Endothelial cell of umbilical vein (primary cell): ENCODE measurements at regions of chr7 and their contacts with region 1.

Region 1: GRCh38 chr7:33722383-33723101 is 182.8 kb upstream of the BMPER start:
- DNase-seq: peak; percentile 59
- H3K4me3 ChIP-seq: no peak overlapping the region
- H3K27ac ChIP-seq: peak overlapping the region; percentile 33
- H3K4me1 ChIP-seq: peaks cover 55% of the 10 kb centered on the region
- H3K27me3 ChIP-seq: no peaks in the 10 kb centered on the region
- CTCF ChIP-seq: no peak
- POLR2A ChIP-seq: no peak

Region 2: GRCh38 chr7:32495298-32496176 is 1227.0 kb before region 1 on chr7 and contains the start of gene AVL9:
- CTCF ChIA-PET with region 1: no interaction called
- POLR2A ChIA-PET with region 1: no interaction called
- dilution Hi-C with region 1: no loop called
- intact Hi-C with region 1: loop called (anchors 10 kb)
- DNase-seq: peak; percentile 96
- H3K4me3 ChIP-seq: peak within 1 kb of the TSS; percentile 89 to 100 (median 100)
- H3K27ac ChIP-seq: peak within 1 kb of the TSS; percentile 82
- H3K4me1 ChIP-seq: peaks cover 13% of the 10 kb centered on the region
- H3K27me3 ChIP-seq: no peaks in the 10 kb centered on the region
- CTCF ChIP-seq: no peak
- POLR2A ChIP-seq: peak; percentile 97
- total RNA-seq, gene AVL9: 42.5 and 44.1 TPM in 2 replicates

Region 3: GRCh38 chr7:32891800-32892520 is 830.6 kb before region 1 on chr7:
- CTCF ChIA-PET with region 1: no interaction called
- POLR2A ChIA-PET with region 1: no interaction called
- dilution Hi-C with region 1: no loop called
- intact Hi-C with region 1: loop called (anchors 5 kb)
- DNase-seq: peak; percentile 96
- H3K4me3 ChIP-seq: peak overlapping the region in 2 of 3 experiments; percentile 68 to 90
- H3K27ac ChIP-seq: peak overlapping the region; percentile 99
- H3K4me1 ChIP-seq: peaks cover 46% of the 10 kb centered on the region
- H3K27me3 ChIP-seq: no peaks in the 10 kb centered on the region
- CTCF ChIP-seq: no peak
- POLR2A ChIP-seq: no peak

Region 4: GRCh38 chr7:33334349-33334748 is 388.2 kb before region 1 on chr7:
- CTCF ChIA-PET with region 1: no interaction called
- POLR2A ChIA-PET with region 1: no interaction called
- dilution Hi-C with region 1: no loop called
- intact Hi-C with region 1: loop called (anchors 10 kb)
- DNase-seq: peak; percentile 41
- H3K4me3 ChIP-seq: no peak overlapping the region
- H3K27ac ChIP-seq: no peak overlapping the region
- H3K4me1 ChIP-seq: no peaks in the 10 kb centered on the region
- H3K27me3 ChIP-seq: no peaks in the 10 kb centered on the region
- CTCF ChIP-seq: peak; percentile 20 to 52
- POLR2A ChIP-seq: no peak

Region 5: GRCh38 chr7:33591490-33592065 is 131.0 kb before region 1 on chr7:
- CTCF ChIA-PET with region 1: no interaction called
- POLR2A ChIA-PET with region 1: no interaction called
- dilution Hi-C with region 1: no loop called
- intact Hi-C with region 1: loop called (anchors 5 kb)
- DNase-seq: peak; percentile 69
- H3K4me3 ChIP-seq: no peak overlapping the region
- H3K27ac ChIP-seq: peak overlapping the region; percentile 27
- H3K4me1 ChIP-seq: peaks cover 17% of the 10 kb centered on the region
- H3K27me3 ChIP-seq: no peaks in the 10 kb centered on the region
- CTCF ChIP-seq: no peak
- POLR2A ChIP-seq: no peak

Region 6: GRCh38 chr7:33744293-33745075 is 21.9 kb after region 1 on chr7:
- CTCF ChIA-PET with region 1: interaction called, 7 read pairs
- POLR2A ChIA-PET with region 1: no interaction called
- dilution Hi-C with region 1: no loop called
- intact Hi-C with region 1: loop called (anchors 1 kb)
- DNase-seq: peak; percentile 34
- H3K4me3 ChIP-seq: no peak overlapping the region
- H3K27ac ChIP-seq: no peak overlapping the region
- H3K4me1 ChIP-seq: peaks cover 11% of the 10 kb centered on the region
- H3K27me3 ChIP-seq: no peaks in the 10 kb centered on the region
- CTCF ChIP-seq: peak; percentile 32 to 40
- POLR2A ChIP-seq: no peak

Region 7: GRCh38 chr7:33789871-33790630 is 67.5 kb after region 1 on chr7:
- CTCF ChIA-PET with region 1: no interaction called
- POLR2A ChIA-PET with region 1: no interaction called
- dilution Hi-C with region 1: no loop called
- intact Hi-C with region 1: no loop called
- DNase-seq: peak; percentile 84
- H3K4me3 ChIP-seq: no peak overlapping the region
- H3K27ac ChIP-seq: peak overlapping the region; percentile 40
- H3K4me1 ChIP-seq: peaks cover 7% of the 10 kb centered on the region
- H3K27me3 ChIP-seq: no peaks in the 10 kb centered on the region
- CTCF ChIP-seq: no peak
- POLR2A ChIP-seq: no peak

Region 8: GRCh38 chr7:34453150-34453549 is 730.6 kb after region 1 on chr7:
- CTCF ChIA-PET with region 1: no interaction called
- POLR2A ChIA-PET with region 1: no interaction called
- dilution Hi-C with region 1: no loop called
- intact Hi-C with region 1: loop called (anchors 5 kb)
- DNase-seq: peak; percentile 71
- H3K4me3 ChIP-seq: peak overlapping the region in 1 of 3 experiments; percentile 27
- H3K27ac ChIP-seq: peak overlapping the region; percentile 63
- H3K4me1 ChIP-seq: peaks cover 30% of the 10 kb centered on the region
- H3K27me3 ChIP-seq: no peaks in the 10 kb centered on the region
- CTCF ChIP-seq: no peak
- POLR2A ChIP-seq: no peak